Natural killer cell (primary cell): ENCODE measurements at regions of chr12 and their contacts with region 1.

Region 1: GRCh38 chr12:92649511-92650227 is 53.1 kb upstream of the PLEKHG7 start:
- DNase-seq: peak; percentile 41 to 87
- ATAC-seq: peak; percentile 89 to 97 (median 96)
- H3K4me3 ChIP-seq: no peak overlapping the region
- H3K4me3 Mint-ChIP-seq: no peak overlapping the region
- H3K27ac ChIP-seq: no peak overlapping the region
- H3K27ac Mint-ChIP-seq: peak overlapping the region; percentile 4 to 65
- H3K4me1 ChIP-seq: no peaks in the 10 kb centered on the region
- H3K4me1 Mint-ChIP-seq: peaks cover 9% of the 10 kb centered on the region in 2 donors
- H3K27me3 ChIP-seq: no peaks in the 10 kb centered on the region
- H3K27me3 Mint-ChIP-seq: peaks cover 3 to 9% of the 10 kb centered on the region in 2 donors
- CTCF ChIP-seq: peak; percentile 74

Region 2: GRCh38 chr12:91361864-91362263 is 1287.8 kb before region 1 on chr12:
- intact Hi-C with region 1: loop called (anchors 5 kb)
- DNase-seq: peak in 1 of 2 donors; percentile 65
- ATAC-seq: peak in 2 of 3 donors; percentile 44 to 49
- H3K4me3 ChIP-seq: no peak overlapping the region
- H3K4me3 Mint-ChIP-seq: no peak overlapping the region
- H3K27ac ChIP-seq: no peak overlapping the region
- H3K27ac Mint-ChIP-seq: no peak overlapping the region
- H3K4me1 ChIP-seq: no peaks in the 10 kb centered on the region
- H3K4me1 Mint-ChIP-seq: peaks cover 0 to 3% of the 10 kb centered on the region in 2 donors
- H3K27me3 ChIP-seq: peaks cover 3% of the 10 kb centered on the region
- H3K27me3 Mint-ChIP-seq: peaks cover 9 to 28% of the 10 kb centered on the region in 2 donors
- CTCF ChIP-seq: peak; percentile 61

Region 3: GRCh38 chr12:91382081-91382543 is 1267.6 kb before region 1 on chr12:
- intact Hi-C with region 1: loop called (anchors 1 kb)
- DNase-seq: peak; percentile 75 to 92
- ATAC-seq: peak; percentile 79 to 88 (median 85)
- H3K4me3 ChIP-seq: no peak overlapping the region
- H3K4me3 Mint-ChIP-seq: no peak overlapping the region
- H3K27ac ChIP-seq: no peak overlapping the region
- H3K27ac Mint-ChIP-seq: peak overlapping the region in 1 of 2 donors; percentile 39
- H3K4me1 ChIP-seq: no peaks in the 10 kb centered on the region
- H3K4me1 Mint-ChIP-seq: peaks cover 9 to 10% of the 10 kb centered on the region in 2 donors
- H3K27me3 ChIP-seq: peaks cover 6% of the 10 kb centered on the region
- H3K27me3 Mint-ChIP-seq: peaks cover 24 to 34% of the 10 kb centered on the region in 2 donors
- CTCF ChIP-seq: peak; percentile 98

Region 4: GRCh38 chr12:91991399-91992187 is 658.1 kb before region 1 on chr12:
- intact Hi-C with region 1: loop called (anchors 2 kb)
- DNase-seq: peak in 1 of 2 donors; percentile 74
- ATAC-seq: peak; percentile 69 to 86 (median 78)
- H3K4me3 ChIP-seq: no peak overlapping the region
- H3K4me3 Mint-ChIP-seq: no peak overlapping the region
- H3K27ac ChIP-seq: no peak overlapping the region
- H3K27ac Mint-ChIP-seq: no peak overlapping the region
- H3K4me1 ChIP-seq: no peaks in the 10 kb centered on the region
- H3K4me1 Mint-ChIP-seq: peaks cover 6 to 15% of the 10 kb centered on the region in 2 donors
- H3K27me3 ChIP-seq: no peaks in the 10 kb centered on the region
- H3K27me3 Mint-ChIP-seq: no peaks in the 10 kb centered on the region
- CTCF ChIP-seq: no peak

Region 5: GRCh38 chr12:92493816-92494215 is 155.9 kb before region 1 on chr12:
- intact Hi-C with region 1: no loop called
- DNase-seq: no peak
- ATAC-seq: no peak
- H3K4me3 ChIP-seq: no peak overlapping the region
- H3K4me3 Mint-ChIP-seq: no peak overlapping the region
- H3K27ac ChIP-seq: no peak overlapping the region
- H3K27ac Mint-ChIP-seq: no peak overlapping the region
- H3K4me1 ChIP-seq: no peaks in the 10 kb centered on the region
- H3K4me1 Mint-ChIP-seq: peaks cover 0 to 7% of the 10 kb centered on the region in 2 donors
- H3K27me3 ChIP-seq: no peaks in the 10 kb centered on the region
- H3K27me3 Mint-ChIP-seq: no peaks in the 10 kb centered on the region
- CTCF ChIP-seq: no peak

Region 6: GRCh38 chr12:92593734-92594402 is 55.8 kb before region 1 on chr12:
- intact Hi-C with region 1: loop called (anchors 1 kb)
- DNase-seq: peak; percentile 70 to 96
- ATAC-seq: peak; percentile 86 to 97 (median 91)
- H3K4me3 ChIP-seq: no peak overlapping the region
- H3K4me3 Mint-ChIP-seq: peak overlapping the region; percentile 83
- H3K27ac ChIP-seq: peak overlapping the region; percentile 99
- H3K27ac Mint-ChIP-seq: peak overlapping the region; percentile 91 to 98
- H3K4me1 ChIP-seq: peaks cover 21% of the 10 kb centered on the region
- H3K4me1 Mint-ChIP-seq: peaks cover 33 to 49% of the 10 kb centered on the region in 2 donors
- H3K27me3 ChIP-seq: no peaks in the 10 kb centered on the region
- H3K27me3 Mint-ChIP-seq: no peaks in the 10 kb centered on the region
- CTCF ChIP-seq: no peak